Activated naive CD4-positive, alpha-beta T cell treated with anti-CD3 and anti-CD28 coated beads for 36 hours (primary cell): ENCODE measurements at regions of chr11 and their contacts with region 1.

Region 1: DNA sequence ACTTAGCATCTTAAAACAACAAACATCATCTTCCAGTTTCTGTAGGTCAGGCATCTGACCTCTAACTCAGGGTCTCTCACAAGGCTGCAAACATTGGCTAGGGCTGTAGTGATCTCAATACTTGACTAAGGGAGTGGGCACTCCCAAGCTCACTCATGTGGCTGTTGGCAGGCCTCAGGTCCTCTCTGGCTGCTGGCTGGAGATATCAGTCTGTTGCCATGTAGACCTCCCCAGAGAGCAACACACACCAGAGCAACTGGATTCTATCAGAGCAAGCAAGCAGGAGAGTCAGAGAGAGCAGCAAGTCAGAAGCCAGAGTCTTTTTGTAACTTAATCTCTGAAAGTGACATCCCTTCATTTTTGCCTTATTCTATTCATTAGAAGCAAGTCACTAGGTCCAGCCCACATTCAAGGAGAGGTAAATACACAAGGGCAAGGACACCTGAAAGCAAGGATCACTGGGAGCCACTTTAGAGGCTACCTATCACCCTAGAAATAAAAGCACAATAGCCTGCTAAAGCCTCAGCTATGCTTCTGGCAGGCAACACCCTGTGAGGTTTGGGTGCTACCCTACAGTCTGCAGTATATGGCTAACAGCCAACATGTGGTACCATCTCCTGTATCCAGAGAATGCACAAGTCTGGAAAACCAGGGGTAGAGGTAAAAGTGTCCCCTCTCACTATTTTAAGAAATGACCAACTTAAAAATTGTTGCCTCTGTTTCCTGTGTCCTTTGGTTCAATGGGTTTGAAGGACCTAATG is 33.5 kb upstream of the CD44 start:
- DNase-seq: no peak
- H3K4me3 Mint-ChIP-seq: no peak overlapping the region
- H3K27ac Mint-ChIP-seq: no peak overlapping the region
- H3K4me1 Mint-ChIP-seq: peaks cover 39% of the 10 kb centered on the region
- H3K27me3 Mint-ChIP-seq: no peaks in the 10 kb centered on the region

Region 2: GRCh38 chr11:35087648-35088047 is 17.9 kb before region 1 on chr11:
- CTCF ChIA-PET with region 1: interaction called, 3 read pairs
- intact Hi-C with region 1: loop called (anchors 2 kb)
- DNase-seq: peak; percentile 42
- H3K4me3 Mint-ChIP-seq: no peak overlapping the region
- H3K27ac Mint-ChIP-seq: peak overlapping the region; percentile 71
- H3K4me1 Mint-ChIP-seq: peaks cover 74% of the 10 kb centered on the region
- H3K27me3 Mint-ChIP-seq: no peaks in the 10 kb centered on the region

Region 3: DNA sequence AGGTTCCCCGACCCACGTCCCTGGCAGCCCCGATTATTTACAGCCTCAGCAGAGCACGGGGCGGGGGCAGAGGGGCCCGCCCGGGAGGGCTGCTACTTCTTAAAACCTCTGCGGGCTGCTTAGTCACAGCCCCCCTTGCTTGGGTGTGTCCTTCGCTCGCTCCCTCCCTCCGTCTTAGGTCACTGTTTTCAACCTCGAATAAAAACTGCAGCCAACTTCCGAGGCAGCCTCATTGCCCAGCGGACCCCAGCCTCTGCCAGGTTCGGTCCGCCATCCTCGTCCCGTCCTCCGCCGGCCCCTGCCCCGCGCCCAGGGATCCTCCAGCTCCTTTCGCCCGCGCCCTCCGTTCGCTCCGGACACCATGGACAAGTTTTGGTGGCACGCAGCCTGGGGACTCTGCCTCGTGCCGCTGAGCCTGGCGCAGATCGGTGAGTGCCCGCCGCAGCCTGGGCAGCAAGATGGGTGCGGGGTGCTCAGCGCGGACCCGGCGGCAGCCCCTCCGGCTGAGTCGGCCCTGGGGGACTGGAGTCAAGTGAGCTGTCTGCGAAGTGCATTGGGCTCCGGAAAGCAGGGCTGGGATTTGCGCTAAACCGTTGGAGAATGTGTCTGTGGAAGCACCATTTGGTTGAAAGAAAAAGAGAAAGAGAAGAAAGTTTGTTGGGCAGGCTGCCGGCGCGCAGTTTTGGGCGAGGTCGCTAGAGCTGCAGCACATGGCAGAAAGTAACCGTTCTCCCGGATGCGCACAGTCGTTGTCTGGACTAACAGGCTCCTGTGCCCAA is 33.6 kb after region 1 on chr11 and contains the start of gene CD44:
- CTCF ChIA-PET with region 1: interaction called, 3 read pairs
- intact Hi-C with region 1: loop called (anchors 1 kb)
- DNase-seq: peak; percentile 77
- H3K4me3 Mint-ChIP-seq: peak within 1 kb of the TSS; percentile 85
- H3K27ac Mint-ChIP-seq: peak within 1 kb of the TSS; percentile 97
- H3K4me1 Mint-ChIP-seq: peaks cover 43% of the 10 kb centered on the region
- H3K27me3 Mint-ChIP-seq: no peaks in the 10 kb centered on the region
- total RNA-seq, gene CD44: 389 to 405 TPM

Region 4: GRCh38 chr11:35436581-35437250 is 331.2 kb after region 1 on chr11:
- CTCF ChIA-PET with region 1: no interaction called
- intact Hi-C with region 1: no loop called
- DNase-seq: no peak
- H3K4me3 Mint-ChIP-seq: no peak overlapping the region
- H3K27ac Mint-ChIP-seq: no peak overlapping the region
- H3K4me1 Mint-ChIP-seq: no peaks in the 10 kb centered on the region
- H3K27me3 Mint-ChIP-seq: peaks cover 14% of the 10 kb centered on the region